Endothelial cell of umbilical vein (primary cell): ENCODE measurements at regions of chr10 and their contacts with region 1.

Region 1: GRCh38 chr10:55263327-55263726 is 462.3 kb upstream of the PCDH15 start:
- DNase-seq: no peak
- H3K4me3 ChIP-seq: no peak overlapping the region
- H3K27ac ChIP-seq: no peak overlapping the region
- H3K4me1 ChIP-seq: no peaks in the 10 kb centered on the region
- H3K27me3 ChIP-seq: peaks cover 0 to 2% of the 10 kb centered on the region in 2 experiments
- CTCF ChIP-seq: no peak
- POLR2A ChIP-seq: no peak

Region 2: DNA sequence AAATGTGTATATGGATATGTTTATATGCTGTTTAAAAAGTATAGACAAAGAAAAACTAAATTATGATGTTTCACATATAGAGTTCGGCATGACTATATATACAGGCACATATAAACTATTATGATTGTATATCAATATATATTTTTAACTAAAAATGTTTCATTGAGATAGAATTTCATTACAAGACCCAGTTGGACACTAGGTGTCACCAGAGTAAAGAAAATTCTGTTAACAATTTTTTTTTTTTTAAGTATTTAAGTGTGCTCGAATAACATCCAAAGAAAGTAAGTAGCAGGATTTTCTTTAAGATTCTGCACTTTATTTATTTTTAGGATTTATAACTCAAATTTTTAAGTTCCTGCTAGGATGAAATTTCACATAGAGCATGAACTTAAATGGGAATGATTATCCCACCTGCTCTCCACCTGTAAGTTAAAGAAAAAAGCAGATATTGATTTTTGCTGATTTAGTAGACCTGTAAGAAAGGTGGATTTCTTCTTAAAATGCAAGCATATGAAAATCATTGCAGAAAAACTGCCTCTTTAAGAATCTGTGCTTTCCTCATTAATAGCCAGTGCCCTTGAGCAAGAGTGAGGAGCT is 1423.8 kb before region 1 on chr10:
- CTCF ChIA-PET with region 1: interaction called, 20 read pairs
- POLR2A ChIA-PET with region 1: no interaction called
- dilution Hi-C with region 1: no loop called
- intact Hi-C with region 1: loop called (anchors 5 kb)
- DNase-seq: peak; percentile 54
- H3K4me3 ChIP-seq: no peak overlapping the region
- H3K27ac ChIP-seq: no peak overlapping the region
- H3K4me1 ChIP-seq: no peaks in the 10 kb centered on the region
- H3K27me3 ChIP-seq: no peaks in the 10 kb centered on the region
- CTCF ChIP-seq: peak in 1 of 2 donors; percentile 30
- POLR2A ChIP-seq: no peak

Region 3: DNA sequence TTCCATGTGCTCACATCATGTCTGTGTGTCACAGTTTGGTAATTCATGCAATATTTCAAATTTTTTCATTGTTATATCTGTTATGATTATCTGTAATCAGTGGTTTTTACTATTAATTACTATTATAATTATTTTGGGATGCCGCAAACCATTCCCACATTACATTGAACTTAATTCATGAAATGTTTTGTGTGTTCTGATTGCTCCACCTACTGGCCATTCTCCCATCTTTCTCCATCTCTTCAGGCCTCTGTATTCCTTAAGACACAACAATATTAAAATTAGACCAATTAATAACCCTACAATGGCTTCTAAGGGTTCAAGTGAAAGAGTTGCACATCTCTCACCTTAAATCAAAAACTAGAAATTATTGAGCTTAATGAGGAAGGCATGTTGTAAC is 860.8 kb before region 1 on chr10:
- CTCF ChIA-PET with region 1: no interaction called
- POLR2A ChIA-PET with region 1: no interaction called
- dilution Hi-C with region 1: no loop called
- intact Hi-C with region 1: loop called (anchors 5 kb)
- DNase-seq: peak; percentile 53
- H3K4me3 ChIP-seq: no peak overlapping the region
- H3K27ac ChIP-seq: no peak overlapping the region
- H3K4me1 ChIP-seq: no peaks in the 10 kb centered on the region
- H3K27me3 ChIP-seq: no peaks in the 10 kb centered on the region
- CTCF ChIP-seq: peak; percentile 16 to 44
- POLR2A ChIP-seq: no peak

Region 4: DNA sequence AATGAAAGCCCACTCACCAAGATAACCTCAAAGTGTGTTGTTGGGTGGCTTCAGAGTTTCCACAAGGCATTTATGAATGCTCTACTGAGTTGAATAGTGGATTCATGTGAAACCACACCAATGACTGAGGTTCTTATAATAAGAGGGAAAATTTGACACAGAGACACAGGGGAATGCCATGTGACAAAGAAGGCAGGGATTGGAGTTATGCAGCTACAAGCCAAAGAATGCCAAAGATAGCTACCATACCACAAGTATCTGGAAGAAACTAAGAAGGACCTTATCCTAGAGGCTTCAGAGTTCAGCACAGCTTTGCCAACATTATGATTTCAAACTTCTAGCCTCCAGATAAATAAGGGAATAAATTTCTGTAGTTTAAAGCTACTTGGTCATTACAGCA is 394.3 kb before region 1 on chr10:
- CTCF ChIA-PET with region 1: no interaction called
- POLR2A ChIA-PET with region 1: no interaction called
- dilution Hi-C with region 1: no loop called
- intact Hi-C with region 1: no loop called
- DNase-seq: no peak
- H3K4me3 ChIP-seq: no peak overlapping the region
- H3K27ac ChIP-seq: no peak overlapping the region
- H3K4me1 ChIP-seq: no peaks in the 10 kb centered on the region
- H3K27me3 ChIP-seq: no peaks in the 10 kb centered on the region
- CTCF ChIP-seq: no peak
- POLR2A ChIP-seq: no peak

Region 5: DNA sequence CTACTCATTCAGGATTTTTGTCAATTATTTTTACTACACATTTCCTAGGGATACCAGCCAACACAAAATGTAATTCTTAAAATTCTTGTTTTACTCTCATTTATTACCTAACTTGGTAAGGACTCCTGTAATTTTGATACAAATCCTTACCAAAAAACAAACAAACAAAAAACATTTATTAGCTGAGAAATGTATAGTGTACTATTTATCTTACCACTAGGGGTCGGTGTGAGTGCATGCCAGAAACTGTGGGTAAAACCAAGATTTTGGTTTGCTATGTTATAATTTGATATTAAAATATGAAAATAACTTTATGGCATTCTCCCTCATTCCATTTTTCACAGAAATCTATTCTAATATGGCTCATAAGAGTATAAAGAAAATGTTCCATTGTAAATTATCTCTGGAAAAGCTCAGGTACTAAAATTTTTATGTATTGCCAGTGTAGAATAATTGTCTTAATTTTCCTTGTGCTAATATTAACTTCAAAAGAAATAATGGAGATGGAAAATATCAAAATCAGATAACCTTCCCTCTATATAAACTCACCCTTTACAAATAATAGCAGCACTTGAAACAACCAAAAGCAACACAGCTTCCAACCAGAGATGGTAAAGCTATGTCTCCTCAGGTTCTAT is 171.5 kb before region 1 on chr10:
- CTCF ChIA-PET with region 1: interaction called, 13 read pairs
- POLR2A ChIA-PET with region 1: no interaction called
- dilution Hi-C with region 1: no loop called
- intact Hi-C with region 1: loop called (anchors 1 kb)
- DNase-seq: peak; percentile 21
- H3K4me3 ChIP-seq: no peak overlapping the region
- H3K27ac ChIP-seq: no peak overlapping the region
- H3K4me1 ChIP-seq: no peaks in the 10 kb centered on the region
- H3K27me3 ChIP-seq: no peaks in the 10 kb centered on the region
- CTCF ChIP-seq: peak; percentile 44 to 53
- POLR2A ChIP-seq: no peak

Region 6: DNA sequence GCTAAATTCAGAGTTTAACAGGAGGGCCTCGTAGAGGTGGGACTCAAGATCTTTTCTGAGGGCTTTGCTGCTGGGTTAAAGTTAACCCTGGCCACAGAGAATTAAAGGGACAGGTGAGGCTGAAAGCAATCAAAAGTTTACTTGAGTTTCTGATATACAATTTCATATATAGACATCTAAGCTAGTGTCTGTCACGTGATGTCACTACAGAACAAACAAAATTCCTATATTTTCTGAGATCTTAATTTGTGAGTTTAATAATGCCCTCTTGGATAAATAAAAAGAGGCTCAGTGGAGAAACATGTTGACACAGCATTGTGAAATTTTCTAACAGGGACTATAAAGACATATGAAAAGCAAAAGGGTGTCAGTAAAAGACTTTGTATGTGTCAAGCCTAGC is 153.3 kb after region 1 on chr10:
- CTCF ChIA-PET with region 1: no interaction called
- POLR2A ChIA-PET with region 1: no interaction called
- dilution Hi-C with region 1: no loop called
- intact Hi-C with region 1: no loop called
- DNase-seq: no peak
- H3K4me3 ChIP-seq: no peak overlapping the region
- H3K27ac ChIP-seq: no peak overlapping the region
- H3K4me1 ChIP-seq: no peaks in the 10 kb centered on the region
- H3K27me3 ChIP-seq: no peaks in the 10 kb centered on the region
- CTCF ChIP-seq: no peak
- POLR2A ChIP-seq: no peak

Region 7: DNA sequence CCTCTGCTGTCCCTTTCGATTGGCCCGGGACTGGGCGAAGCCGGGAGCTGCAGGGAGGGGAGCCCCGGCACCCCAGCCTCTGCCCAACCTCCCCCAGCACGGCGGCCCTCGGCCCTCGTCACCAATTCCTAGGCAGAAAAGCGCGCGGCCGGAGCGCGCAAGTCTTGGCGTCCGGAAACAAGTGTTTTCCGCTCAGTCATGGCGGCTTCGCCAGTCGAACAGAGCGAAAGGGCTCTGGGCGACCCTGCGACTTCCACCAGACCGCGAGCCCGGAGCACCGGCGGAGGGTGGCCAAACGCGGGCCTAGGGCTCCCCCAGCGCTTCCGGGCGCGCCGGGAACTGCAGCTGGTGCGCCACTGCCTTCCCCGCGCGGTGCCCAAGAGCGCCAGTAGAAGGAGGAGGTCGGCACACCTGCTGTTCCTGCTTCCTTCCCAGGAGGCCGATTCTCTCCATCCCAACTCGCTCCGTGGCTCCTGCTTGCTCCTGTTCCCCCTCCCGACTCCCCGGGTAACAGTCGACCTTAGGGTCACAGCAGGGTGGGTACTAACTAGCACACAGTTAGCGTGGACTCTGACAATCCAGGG is 367.8 kb after region 1 on chr10:
- CTCF ChIA-PET with region 1: no interaction called
- POLR2A ChIA-PET with region 1: no interaction called
- dilution Hi-C with region 1: no loop called
- intact Hi-C with region 1: loop called (anchors 10 kb)
- DNase-seq: peak; percentile 32
- H3K4me3 ChIP-seq: peak overlapping the region; percentile 23 to 57 (median 51)
- H3K27ac ChIP-seq: no peak overlapping the region
- H3K4me1 ChIP-seq: peaks cover 17% of the 10 kb centered on the region
- H3K27me3 ChIP-seq: peaks cover 23 to 25% of the 10 kb centered on the region in 2 experiments
- CTCF ChIP-seq: peak; percentile 66 to 71
- POLR2A ChIP-seq: no peak

Region 8: GRCh38 chr10:55881588-55881987 is 618.3 kb after region 1 on chr10:
- CTCF ChIA-PET with region 1: no interaction called
- POLR2A ChIA-PET with region 1: no interaction called
- dilution Hi-C with region 1: no loop called
- intact Hi-C with region 1: no loop called
- DNase-seq: no peak
- H3K4me3 ChIP-seq: no peak overlapping the region
- H3K27ac ChIP-seq: no peak overlapping the region
- H3K4me1 ChIP-seq: no peaks in the 10 kb centered on the region
- H3K27me3 ChIP-seq: no peaks in the 10 kb centered on the region
- CTCF ChIP-seq: no peak
- POLR2A ChIP-seq: no peak